Activated CD4-positive, alpha-beta T cell treated with anti-CD3 and anti-CD28 coated beads, Interleukin-2, amount 10 ng/mL, durations not matched to agents 24 days and 14 days (primary cell): ENCODE measurements at regions of chr13 and their contacts with region 1.

Region 1: GRCh38 chr13:20489185-20489820 is 36.4 kb downstream of the CRYL1 start:
- DNase-seq: peak; percentile 86
- H3K4me3 Mint-ChIP-seq: no peak overlapping the region
- H3K27ac Mint-ChIP-seq: no peak overlapping the region
- H3K4me1 Mint-ChIP-seq: peaks cover 8% of the 10 kb centered on the region
- H3K27me3 Mint-ChIP-seq: no peaks in the 10 kb centered on the region

Region 2: DNA sequence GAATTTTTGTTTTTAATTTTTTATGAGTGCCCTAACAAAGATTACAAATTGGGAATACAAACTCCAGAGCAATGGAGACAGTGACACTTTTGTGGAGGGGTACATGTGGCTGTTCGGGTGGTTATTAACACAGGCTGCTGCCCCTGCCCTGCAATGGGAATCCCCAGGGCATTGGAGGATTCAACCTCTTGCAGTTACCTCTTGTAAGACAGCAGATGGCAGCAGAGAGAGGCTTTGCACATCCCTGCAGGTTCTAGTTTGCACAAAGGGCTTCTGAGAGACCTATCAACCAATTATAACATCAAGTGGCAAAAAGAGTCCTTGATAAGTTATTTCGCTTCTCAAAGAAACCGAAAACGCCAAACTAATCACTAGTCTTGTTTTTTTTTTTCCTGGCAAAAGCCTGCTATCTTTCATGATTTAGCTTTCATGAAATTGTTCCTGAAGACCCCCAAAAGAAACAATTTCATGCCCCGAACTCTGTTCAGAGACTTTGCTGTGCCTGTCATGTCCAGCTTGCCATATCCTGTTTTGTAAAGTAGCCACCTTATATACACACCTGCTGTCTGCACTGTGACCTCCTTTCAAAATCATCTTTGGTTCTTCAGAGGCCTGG is 307.0 kb before region 1 on chr13:
- intact Hi-C with region 1: loop called (anchors 1 kb)
- DNase-seq: peak; percentile 85
- H3K4me3 Mint-ChIP-seq: no peak overlapping the region
- H3K27ac Mint-ChIP-seq: no peak overlapping the region
- H3K4me1 Mint-ChIP-seq: no peaks in the 10 kb centered on the region
- H3K27me3 Mint-ChIP-seq: peaks cover 47% of the 10 kb centered on the region

Region 3: DNA sequence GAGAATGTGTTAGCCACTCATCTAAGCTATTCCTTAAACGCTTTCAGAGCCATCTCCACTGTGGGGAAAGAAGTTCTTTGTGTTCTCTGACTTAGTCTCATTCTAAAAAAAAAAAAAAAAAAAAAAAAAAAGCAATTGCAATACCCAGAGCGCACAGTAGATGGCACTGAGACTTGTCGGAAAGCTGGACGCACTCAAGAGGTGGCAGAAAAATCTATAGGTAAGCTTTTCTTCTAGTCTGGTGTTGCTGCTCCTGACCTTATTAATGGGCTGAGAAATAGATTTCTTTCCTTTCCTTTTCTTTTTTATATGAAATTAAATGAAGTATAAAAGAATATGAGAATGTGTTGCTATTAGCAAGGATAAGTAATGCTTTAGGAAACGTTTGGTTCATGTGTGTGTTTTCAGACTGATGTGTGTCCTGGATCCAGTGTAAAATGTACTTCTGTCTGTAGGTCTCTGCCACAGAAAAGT is 291.9 kb before region 1 on chr13:
- intact Hi-C with region 1: loop called (anchors 1 kb)
- DNase-seq: peak; percentile 71
- H3K4me3 Mint-ChIP-seq: no peak overlapping the region
- H3K27ac Mint-ChIP-seq: no peak overlapping the region
- H3K4me1 Mint-ChIP-seq: peaks cover 25% of the 10 kb centered on the region
- H3K27me3 Mint-ChIP-seq: peaks cover 49% of the 10 kb centered on the region

Region 4: GRCh38 chr13:20353973-20354372 is 135.3 kb before region 1 on chr13:
- intact Hi-C with region 1: loop called (anchors 5 kb)
- DNase-seq: no peak
- H3K4me3 Mint-ChIP-seq: no peak overlapping the region
- H3K27ac Mint-ChIP-seq: no peak overlapping the region
- H3K4me1 Mint-ChIP-seq: peaks cover 8% of the 10 kb centered on the region
- H3K27me3 Mint-ChIP-seq: no peaks in the 10 kb centered on the region

Region 5: GRCh38 chr13:20580257-20580656 is 91.0 kb after region 1 on chr13:
- intact Hi-C with region 1: no loop called
- DNase-seq: no peak
- H3K4me3 Mint-ChIP-seq: no peak overlapping the region
- H3K27ac Mint-ChIP-seq: no peak overlapping the region
- H3K4me1 Mint-ChIP-seq: no peaks in the 10 kb centered on the region
- H3K27me3 Mint-ChIP-seq: no peaks in the 10 kb centered on the region

Region 6: GRCh38 chr13:20924758-20925394 is 435.6 kb after region 1 on chr13:
- intact Hi-C with region 1: no loop called
- DNase-seq: peak; percentile 91
- H3K4me3 Mint-ChIP-seq: no peak overlapping the region
- H3K27ac Mint-ChIP-seq: no peak overlapping the region
- H3K4me1 Mint-ChIP-seq: no peaks in the 10 kb centered on the region
- H3K27me3 Mint-ChIP-seq: peaks cover 4% of the 10 kb centered on the region